AG04449 (cell line): ENCODE measurements at regions of chr7 and their contacts with region 1.

Region 1: GRCh38 chr7:74401137-74401859 is 52.4 kb upstream of the GTF2IRD1 start:
- DNase-seq: no peak
- H3K4me3 ChIP-seq: no peak overlapping the region
- CTCF ChIP-seq: peak; percentile 96

Region 2: GRCh38 chr7:74068393-74069085 is 332.8 kb before region 1 on chr7:
- CTCF ChIA-PET with region 1: interaction called, 68 read pairs
- POLR2A ChIA-PET with region 1: no interaction called
- DNase-seq: no peak
- H3K4me3 ChIP-seq: no peak overlapping the region
- CTCF ChIP-seq: no peak

Region 3: GRCh38 chr7:74183613-74184450 is 217.5 kb before region 1 on chr7:
- CTCF ChIA-PET with region 1: interaction called, 18 read pairs
- POLR2A ChIA-PET with region 1: no interaction called
- DNase-seq: no peak
- H3K4me3 ChIP-seq: no peak overlapping the region
- CTCF ChIP-seq: no peak

Region 4: GRCh38 chr7:74230446-74231231 is 170.7 kb before region 1 on chr7:
- CTCF ChIA-PET with region 1: interaction called, 10 read pairs
- POLR2A ChIA-PET with region 1: no interaction called
- DNase-seq: no peak
- H3K4me3 ChIP-seq: no peak overlapping the region
- CTCF ChIP-seq: no peak

Region 5: DNA sequence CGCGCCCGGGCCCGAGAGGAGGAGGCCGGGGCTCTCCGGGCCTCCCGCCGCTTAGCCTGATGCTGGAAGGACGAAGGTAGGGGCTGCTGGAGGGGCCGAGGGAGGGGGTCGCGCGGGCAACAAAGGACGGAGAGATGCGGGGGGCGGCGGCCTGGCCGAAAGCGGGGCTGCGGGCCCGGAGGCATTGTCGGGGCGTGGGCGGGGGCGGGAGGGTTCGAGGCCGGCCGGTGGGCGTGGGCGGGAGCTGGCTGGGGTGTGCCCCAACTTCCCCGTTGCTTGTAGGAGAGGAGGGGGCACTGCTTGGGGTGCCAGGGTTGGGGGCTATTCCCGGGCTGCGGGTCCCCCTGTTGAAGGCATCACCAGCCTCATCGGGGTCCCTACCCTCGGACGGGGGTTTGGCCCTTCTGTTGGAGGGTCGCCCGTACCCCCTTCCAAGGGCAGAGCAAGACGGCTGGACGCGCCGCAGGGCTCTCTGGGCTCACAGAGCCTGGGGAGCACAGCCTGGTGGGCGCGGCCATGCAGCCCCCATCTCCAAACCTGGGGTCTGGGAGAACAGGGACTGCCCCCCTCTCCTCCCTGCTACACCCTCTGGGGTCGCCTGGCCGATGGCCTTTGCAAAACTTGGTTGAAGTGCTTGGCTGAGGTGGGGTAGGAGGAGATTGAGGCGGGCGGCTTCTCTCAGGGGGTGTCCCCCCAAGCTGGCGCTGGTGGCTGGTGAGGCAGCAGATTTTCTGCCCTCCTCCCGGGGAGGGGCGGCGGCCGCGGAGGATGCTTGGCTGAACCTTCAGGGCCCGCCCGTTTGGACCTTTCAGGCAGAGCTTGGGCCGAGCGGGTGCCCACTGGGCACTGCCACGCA is 111.4 kb before region 1 on chr7:
- CTCF ChIA-PET with region 1: interaction called, 17 read pairs
- POLR2A ChIA-PET with region 1: no interaction called
- DNase-seq: no peak
- H3K4me3 ChIP-seq: peak overlapping the region; percentile 81
- CTCF ChIP-seq: no peak

Region 6: DNA sequence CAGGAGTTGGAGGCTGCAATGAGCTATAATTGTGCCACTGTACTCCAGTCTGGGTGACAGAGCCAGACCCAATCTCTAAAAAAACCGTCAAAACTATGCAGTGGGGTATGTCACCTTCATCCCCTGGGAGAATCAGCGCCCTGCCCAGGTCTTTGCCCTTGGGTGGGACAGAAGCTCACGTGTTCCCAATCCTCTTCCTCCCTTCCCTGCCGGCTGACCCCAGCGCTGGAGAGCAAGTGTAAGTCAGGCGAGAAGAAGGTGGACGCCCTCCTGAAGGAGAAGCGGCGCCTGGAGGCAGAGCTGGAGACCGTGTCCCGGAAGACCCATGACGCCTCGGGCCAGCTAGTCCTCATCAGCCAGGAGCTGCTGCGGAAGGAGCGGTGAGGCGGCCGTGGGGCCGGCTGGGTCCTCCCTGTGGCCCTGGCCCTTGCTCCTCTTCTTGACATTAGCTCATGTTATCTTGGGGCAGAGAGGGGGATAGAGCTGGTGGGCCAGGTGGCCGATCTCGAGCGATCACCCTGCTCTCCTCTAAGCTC is 12.3 kb before region 1 on chr7:
- CTCF ChIA-PET with region 1: interaction called, 84 read pairs
- POLR2A ChIA-PET with region 1: no interaction called
- DNase-seq: no peak
- H3K4me3 ChIP-seq: no peak overlapping the region
- CTCF ChIP-seq: no peak

Region 7: DNA sequence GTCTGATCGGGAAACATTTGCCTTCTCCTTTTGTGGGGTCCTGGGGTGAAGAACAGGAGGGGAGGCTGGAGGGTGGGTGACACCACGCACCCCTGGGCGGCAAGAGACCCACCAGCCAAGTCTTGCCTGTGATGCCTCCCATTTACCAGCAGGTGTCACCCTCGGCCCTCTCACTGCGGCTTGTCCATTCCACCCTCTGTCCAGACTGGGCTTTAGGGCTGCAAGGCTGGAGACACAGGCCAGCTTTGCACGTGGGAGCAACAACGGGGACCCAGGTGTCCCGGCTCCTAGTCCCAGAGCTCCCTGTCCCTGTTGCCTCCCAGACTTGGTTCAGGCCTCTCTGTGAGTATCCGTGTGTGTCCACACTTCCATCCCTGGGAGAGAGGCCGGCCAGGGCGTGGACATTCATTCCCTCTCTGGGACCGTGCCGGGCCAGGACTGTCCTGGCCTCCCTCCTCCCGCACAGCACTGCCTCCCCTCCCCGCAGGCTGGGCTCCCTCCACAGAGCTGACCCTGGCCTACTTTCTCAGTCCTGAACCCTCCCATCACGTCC is 16.2 kb after region 1 on chr7:
- CTCF ChIA-PET with region 1: interaction called, 36 read pairs
- POLR2A ChIA-PET with region 1: no interaction called
- DNase-seq: no peak
- H3K4me3 ChIP-seq: no peak overlapping the region
- CTCF ChIP-seq: peak; percentile 98